ENCODE measurements at regions of chr17 and their contacts with region 1.

Region 1: DNA sequence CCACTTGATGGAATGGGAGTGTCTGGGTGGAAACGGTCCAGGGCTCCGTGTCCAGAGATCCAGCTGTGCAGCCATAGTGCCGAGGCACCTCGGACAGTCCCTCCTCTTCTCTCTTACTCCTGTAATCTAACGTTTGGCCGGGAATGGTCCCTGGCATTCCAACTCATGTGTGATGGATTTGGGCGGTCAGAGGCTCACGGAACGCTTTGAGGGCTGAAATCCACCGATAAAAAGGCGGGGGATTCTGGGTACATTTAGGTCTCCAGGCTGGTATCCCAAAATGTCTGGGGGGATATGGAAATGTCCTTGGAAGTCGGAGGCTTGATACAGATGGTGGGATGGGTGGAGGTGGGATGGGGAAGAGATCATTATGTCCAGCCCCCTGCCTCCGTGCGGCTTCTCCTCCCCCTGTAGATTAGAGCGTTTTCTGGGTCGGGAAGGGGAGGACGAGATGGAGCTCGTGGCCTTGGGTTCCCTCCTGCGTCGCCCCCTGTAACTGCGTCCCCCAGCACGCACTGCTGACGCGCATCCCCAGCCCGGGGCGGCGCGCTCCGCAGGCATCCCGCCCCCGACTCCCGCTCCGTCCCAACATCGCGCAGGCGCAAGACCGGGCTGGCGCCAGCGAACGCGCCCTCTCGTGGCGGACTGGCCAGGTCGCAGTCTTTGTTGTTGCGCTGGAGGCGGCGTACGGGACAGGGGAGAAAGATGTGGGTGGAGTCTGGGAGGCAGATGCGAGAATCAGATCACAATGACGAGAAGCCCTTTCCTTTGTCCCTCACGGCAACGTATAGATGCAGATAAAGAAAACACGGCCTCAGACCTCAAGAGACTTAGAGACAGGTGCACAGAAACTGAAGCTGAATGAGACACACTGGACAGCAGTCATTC is 4.5 kb upstream of the SGCA start:
- DNase-seq: peak; percentile 98
- H3K4me3 Mint-ChIP-seq: peak overlapping the region; percentile 79
- H3K27ac Mint-ChIP-seq: peak overlapping the region; percentile 91
- H3K4me1 Mint-ChIP-seq: peaks cover 33% of the 10 kb centered on the region
- H3K27me3 Mint-ChIP-seq: no peaks in the 10 kb centered on the region

Region 2: GRCh38 chr17:49809056-49809455 is 352.2 kb before region 1 on chr17:
- CTCF ChIA-PET with region 1: no interaction called
- POLR2A ChIA-PET with region 1: no interaction called
- intact Hi-C with region 1: no loop called
- DNase-seq: no peak
- H3K4me3 Mint-ChIP-seq: no peak overlapping the region
- H3K27ac Mint-ChIP-seq: no peak overlapping the region
- H3K4me1 Mint-ChIP-seq: peaks cover 16% of the 10 kb centered on the region
- H3K27me3 Mint-ChIP-seq: no peaks in the 10 kb centered on the region

Region 3: DNA sequence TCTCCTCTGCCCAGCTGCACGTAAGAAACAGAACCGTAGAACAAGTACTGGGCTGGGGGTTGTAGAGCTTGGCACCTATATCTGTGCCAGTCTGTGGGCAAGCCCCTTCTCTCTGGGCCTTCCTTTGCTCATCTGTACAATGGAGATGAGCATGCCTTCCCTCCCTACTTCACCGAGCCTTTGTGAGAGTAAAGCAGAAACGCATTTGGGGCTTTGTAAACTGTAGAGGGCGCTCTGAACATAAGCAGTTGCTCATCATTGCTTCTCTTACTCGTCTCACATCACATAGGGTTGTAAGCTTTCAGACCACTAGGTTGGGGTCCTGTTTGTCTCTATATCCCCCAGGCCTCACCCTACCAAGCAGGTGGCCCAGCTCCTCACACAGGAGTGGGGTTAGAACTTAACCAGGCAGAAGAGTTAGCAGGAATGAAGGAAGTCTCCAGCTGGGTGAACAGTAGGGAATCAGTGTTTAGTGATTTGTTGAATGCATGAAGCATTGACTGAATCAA is 46.4 kb before region 1 on chr17:
- CTCF ChIA-PET with region 1: interaction called, 31 read pairs
- POLR2A ChIA-PET with region 1: no interaction called
- intact Hi-C with region 1: loop called (anchors 2 kb)
- DNase-seq: peak; percentile 53
- H3K4me3 Mint-ChIP-seq: no peak overlapping the region
- H3K27ac Mint-ChIP-seq: no peak overlapping the region
- H3K4me1 Mint-ChIP-seq: peaks cover 10% of the 10 kb centered on the region
- H3K27me3 Mint-ChIP-seq: peaks cover 24% of the 10 kb centered on the region

Measured in activated CD4-positive, alpha-beta memory T cell treated with anti-CD3 and anti-CD28 coated beads for 36 hours (primary cell).